ENCODE measurements at regions of chr12 and their contacts with region 1.

Region 1: GRCh38 chr12:104137913-104138796 is at the start of gene NFYB:
- DNase-seq: peak; percentile 94
- ATAC-seq: peak; percentile 98
- H3K4me3 Mint-ChIP-seq: peak within 1 kb of the TSS; percentile 89
- H3K27ac Mint-ChIP-seq: peak within 1 kb of the TSS; percentile 88
- H3K4me1 Mint-ChIP-seq: peaks cover 14% of the 10 kb centered on the region
- H3K27me3 Mint-ChIP-seq: peaks cover 18% of the 10 kb centered on the region
- total RNA-seq, gene NFYB: 24.8 to 28.5 TPM

Region 2: DNA sequence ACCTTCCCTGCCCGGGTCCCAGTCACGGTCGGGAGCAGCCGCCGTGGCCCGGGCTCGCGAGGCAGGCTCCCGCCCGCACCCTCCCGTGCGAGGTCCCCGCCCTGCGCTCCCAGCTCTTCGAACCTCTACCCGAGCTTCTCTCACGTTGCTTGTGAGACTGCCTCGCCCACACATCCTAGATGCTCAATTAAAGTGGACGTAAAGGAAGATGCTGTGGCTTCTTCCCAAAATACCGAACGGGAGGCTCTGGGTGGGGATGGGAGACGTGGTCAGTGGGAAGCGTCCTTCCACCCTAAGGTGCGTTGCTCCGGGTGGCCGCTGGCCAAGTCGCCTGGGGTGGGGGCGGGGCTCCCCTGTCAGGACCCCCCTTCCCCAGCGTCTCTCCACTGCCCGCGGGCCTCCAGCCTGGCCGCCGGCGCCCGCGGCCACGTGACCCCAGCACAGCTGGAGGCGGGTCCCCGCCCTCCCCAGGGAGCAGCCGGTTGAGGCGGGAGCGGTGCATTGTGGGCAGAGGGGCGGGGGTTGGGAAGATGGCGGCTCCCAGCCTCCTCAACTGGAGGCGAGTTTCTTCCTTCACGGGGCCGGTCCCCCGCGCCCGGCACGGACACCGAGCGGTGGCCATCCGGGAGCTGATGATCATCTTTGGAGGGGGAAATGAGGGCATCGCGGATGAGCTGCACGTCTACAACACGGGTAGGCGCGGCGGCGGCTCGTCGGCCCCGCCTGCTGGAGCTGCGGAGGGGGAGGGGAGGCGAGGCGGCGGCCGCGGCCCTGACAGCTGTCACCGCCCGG is 73.9 kb before region 1 on chr12 and contains the start of gene HCFC2:
- POLR2A ChIA-PET with region 1: interaction called, 19 read pairs
- DNase-seq: peak; percentile 93
- ATAC-seq: peak; percentile 90
- H3K4me3 Mint-ChIP-seq: peak within 1 kb of the TSS; percentile 92
- H3K27ac Mint-ChIP-seq: peak within 1 kb of the TSS; percentile 90
- H3K4me1 Mint-ChIP-seq: peaks cover 24% of the 10 kb centered on the region
- H3K27me3 Mint-ChIP-seq: peaks cover 23% of the 10 kb centered on the region
- total RNA-seq, gene HCFC2: 12.7 to 13.5 TPM

Region 3: DNA sequence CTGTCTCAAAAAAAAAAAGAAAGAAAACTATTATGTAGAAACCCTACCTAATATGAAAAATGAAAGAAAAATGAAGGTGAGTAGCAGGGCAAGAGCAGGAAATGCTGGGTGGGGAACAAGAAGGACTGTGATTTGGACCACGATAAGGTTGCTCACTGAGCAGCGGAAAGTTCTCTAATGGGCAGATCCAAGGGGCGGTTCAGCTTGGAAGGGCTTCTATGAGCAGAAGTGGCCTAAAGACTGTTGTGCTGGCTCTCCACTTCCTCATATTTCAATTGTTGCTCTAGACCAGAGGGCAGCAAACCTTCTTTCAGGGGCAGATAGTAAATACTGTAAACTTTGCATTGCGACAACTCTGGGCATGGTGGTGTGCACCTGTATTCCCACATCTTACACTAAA is 16.1 kb after region 1 on chr12:
- POLR2A ChIA-PET with region 1: interaction called, 11 read pairs
- DNase-seq: no peak
- ATAC-seq: no peak
- H3K4me3 Mint-ChIP-seq: peak overlapping the region; percentile 34
- H3K27ac Mint-ChIP-seq: peak overlapping the region; percentile 14
- H3K4me1 Mint-ChIP-seq: peaks cover 7% of the 10 kb centered on the region
- H3K27me3 Mint-ChIP-seq: peaks cover 9% of the 10 kb centered on the region

Measured in activated naive CD8-positive, alpha-beta T cell treated with anti-CD3 and anti-CD28 coated beads, Interleukin-2, amount 10 ng/mL, durations not matched to agents 7 days and 5 days (primary cell).